A549 (cell line): ENCODE measurements at regions of chr22 and their contacts with region 1.

Region 1: DNA sequence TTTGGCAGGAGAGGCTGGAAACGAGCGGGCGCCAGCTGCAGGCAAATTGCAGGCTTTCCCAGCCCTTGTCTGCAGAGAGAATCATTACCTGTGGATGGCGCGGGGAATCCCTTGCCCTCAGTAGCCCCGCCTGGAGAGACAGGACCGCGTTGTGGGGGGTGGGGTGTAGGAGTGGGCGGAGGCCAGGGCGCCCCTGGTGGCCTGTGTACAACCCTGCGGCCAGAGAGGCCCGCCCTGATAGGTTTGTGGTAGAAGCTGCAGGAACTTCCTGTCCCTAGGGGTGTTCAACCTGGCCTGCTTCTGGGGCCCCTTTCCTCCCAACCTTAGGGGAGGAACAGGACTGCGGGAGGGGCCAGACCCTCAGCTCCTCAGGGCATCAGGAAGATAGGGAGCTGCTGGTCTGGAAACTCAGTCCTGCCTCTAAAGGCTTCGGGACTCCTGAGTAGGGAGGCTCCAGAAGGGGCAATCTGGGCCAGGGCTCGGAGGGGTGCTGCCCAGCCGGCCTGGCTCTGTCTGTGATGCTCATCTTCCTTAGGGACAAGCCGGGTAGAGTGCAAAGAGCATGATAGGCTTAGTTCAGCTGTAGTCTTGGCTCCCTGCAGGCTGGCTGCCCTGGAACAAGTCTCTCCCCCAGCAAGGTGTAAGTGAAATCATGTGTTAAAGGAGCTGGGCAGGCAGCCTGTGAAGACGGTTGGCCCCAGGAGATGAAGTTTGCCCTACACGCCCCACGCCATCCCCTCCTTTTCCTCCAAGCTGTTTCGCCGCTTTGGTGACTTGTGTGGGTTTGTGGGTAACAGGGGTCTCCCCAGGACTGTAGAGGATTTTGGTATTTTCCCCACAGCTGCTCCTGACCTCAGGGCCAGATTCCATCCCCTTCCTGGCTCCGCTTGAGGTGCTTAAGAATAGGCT is 24.1 kb upstream of the SUSD2 start:
- DNase-seq: peak; percentile 82 to 86
- ATAC-seq: peak; percentile 91 to 94
- H3K4me3 ChIP-seq: peak overlapping the region; percentile 83
- H3K27ac ChIP-seq: peak overlapping the region; percentile 79 to 96
- H3K4me1 ChIP-seq: peaks cover 14% of the 10 kb centered on the region
- CTCF ChIP-seq: peak; percentile 57
- EP300 ChIP-seq: no peak
- POLR2A ChIP-seq: no peak
- RAD21 ChIP-seq: peak in 1 of 2 experiments; percentile 26; a peak in 1 of 5 replicates

Region 2: GRCh38 chr22:24124247-24124646 is 32.9 kb before region 1 on chr22:
- CTCF ChIA-PET with region 1: interaction called, 12 read pairs
- POLR2A ChIA-PET with region 1: no interaction called
- DNase-seq: no peak
- ATAC-seq: no peak
- H3K4me3 ChIP-seq: no peak overlapping the region
- H3K27ac ChIP-seq: no peak overlapping the region
- H3K4me1 ChIP-seq: no peaks in the 10 kb centered on the region
- CTCF ChIP-seq: no peak
- EP300 ChIP-seq: no peak
- POLR2A ChIP-seq: no peak
- RAD21 ChIP-seq: no peak

Region 3: GRCh38 chr22:24133187-24133965 is 23.8 kb before region 1 on chr22:
- CTCF ChIA-PET with region 1: interaction called, 53 read pairs
- POLR2A ChIA-PET with region 1: no interaction called
- DNase-seq: peak in 1 of 2 experiments; percentile 27
- ATAC-seq: peak; percentile 25 to 67; a peak in 3 of 6 replicates
- H3K4me3 ChIP-seq: no peak overlapping the region
- H3K27ac ChIP-seq: no peak overlapping the region
- H3K4me1 ChIP-seq: no peaks in the 10 kb centered on the region
- CTCF ChIP-seq: no peak
- EP300 ChIP-seq: no peak
- POLR2A ChIP-seq: no peak
- RAD21 ChIP-seq: peak in 1 of 2 experiments; percentile 35; a peak in 2 of 5 replicates

Region 4: DNA sequence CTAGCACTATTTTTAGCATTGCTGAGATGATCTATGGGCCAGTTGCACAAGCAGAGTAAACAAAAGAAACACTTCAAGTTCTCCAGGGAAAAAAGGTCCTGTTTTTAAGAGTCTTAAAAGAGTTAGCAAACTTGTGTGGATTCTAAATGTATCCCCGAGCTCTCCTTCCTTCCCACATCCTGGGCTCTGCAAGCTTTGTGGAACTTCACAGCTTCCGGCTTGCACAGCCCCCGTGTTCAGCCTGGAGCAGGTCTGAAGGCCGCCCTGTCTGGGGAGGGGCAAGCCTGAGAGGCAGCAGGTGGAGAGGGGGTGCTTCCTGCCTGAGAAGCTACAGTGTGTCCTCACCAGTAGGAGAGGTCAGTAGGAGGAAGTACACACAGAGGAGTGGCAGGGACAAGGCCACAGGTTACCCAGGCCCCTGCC is 11.0 kb before region 1 on chr22:
- CTCF ChIA-PET with region 1: interaction called, 53 read pairs
- POLR2A ChIA-PET with region 1: interaction called, 3 read pairs
- DNase-seq: peak; percentile 22 to 53
- ATAC-seq: peak; percentile 83 to 88
- H3K4me3 ChIP-seq: no peak overlapping the region
- H3K27ac ChIP-seq: peak overlapping the region; percentile 69 to 80
- H3K4me1 ChIP-seq: peaks cover 31% of the 10 kb centered on the region
- CTCF ChIP-seq: no peak
- EP300 ChIP-seq: no peak
- POLR2A ChIP-seq: no peak
- RAD21 ChIP-seq: no peak

Region 5: DNA sequence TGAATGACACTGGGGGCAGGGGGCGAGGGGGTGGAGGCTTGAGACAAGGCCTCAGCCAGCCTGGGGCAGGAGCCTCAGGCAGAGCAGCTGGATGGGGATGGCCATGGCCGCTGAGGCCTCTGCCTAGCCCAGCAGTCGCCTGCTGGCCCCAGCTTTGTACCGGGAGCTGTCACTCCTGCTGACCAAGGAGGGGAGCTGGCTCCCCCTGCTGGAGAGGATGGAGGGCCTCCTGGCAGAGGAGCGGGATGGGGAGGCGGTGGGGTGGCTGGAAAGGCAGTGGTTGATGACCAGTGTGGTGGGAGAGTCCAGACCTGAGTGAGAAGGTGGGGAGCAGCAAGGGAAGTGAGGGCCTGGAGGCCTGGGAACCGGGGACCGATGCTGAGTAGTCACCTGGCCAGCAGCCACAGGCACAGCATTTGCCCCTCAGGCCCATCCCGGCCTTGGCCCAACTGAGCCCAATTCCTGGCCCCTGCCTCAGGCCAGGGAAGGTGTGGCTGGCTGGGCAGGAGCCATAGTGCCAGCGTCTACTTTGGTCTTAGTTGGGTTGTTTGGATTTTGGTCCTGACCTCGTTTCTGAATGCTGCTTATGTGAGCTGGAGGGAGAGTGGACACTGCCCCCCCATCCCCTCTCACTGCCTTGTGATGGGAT is 18.1 kb after region 1 on chr22:
- CTCF ChIA-PET with region 1: interaction called, 75 read pairs
- POLR2A ChIA-PET with region 1: no interaction called
- DNase-seq: peak; percentile 53 to 71
- ATAC-seq: peak; percentile 81 to 91
- H3K4me3 ChIP-seq: no peak overlapping the region
- H3K27ac ChIP-seq: peak overlapping the region in 1 of 2 experiments; percentile 66; a peak in 3 of 6 replicates
- H3K4me1 ChIP-seq: 0 out of 3 replicates have a peak, but pooled peaks cover 2% of the 10 kb centered on the region
- CTCF ChIP-seq: peak; percentile 67
- EP300 ChIP-seq: no peak
- POLR2A ChIP-seq: no peak
- RAD21 ChIP-seq: peak; percentile 81

Region 6: GRCh38 chr22:24338726-24339451 is 181.7 kb after region 1 on chr22:
- CTCF ChIA-PET with region 1: no interaction called
- POLR2A ChIA-PET with region 1: no interaction called
- DNase-seq: no peak
- ATAC-seq: no peak
- H3K4me3 ChIP-seq: no peak overlapping the region
- H3K27ac ChIP-seq: no peak overlapping the region
- H3K4me1 ChIP-seq: no peaks in the 10 kb centered on the region
- CTCF ChIP-seq: no peak
- EP300 ChIP-seq: no peak
- POLR2A ChIP-seq: no peak
- RAD21 ChIP-seq: no peak